Activated CD8-positive, alpha-beta T cell treated with anti-CD3 and anti-CD28 coated beads for 36 hours (primary cell): ENCODE measurements at regions of chr17 and their contacts with region 1.

Region 1: DNA sequence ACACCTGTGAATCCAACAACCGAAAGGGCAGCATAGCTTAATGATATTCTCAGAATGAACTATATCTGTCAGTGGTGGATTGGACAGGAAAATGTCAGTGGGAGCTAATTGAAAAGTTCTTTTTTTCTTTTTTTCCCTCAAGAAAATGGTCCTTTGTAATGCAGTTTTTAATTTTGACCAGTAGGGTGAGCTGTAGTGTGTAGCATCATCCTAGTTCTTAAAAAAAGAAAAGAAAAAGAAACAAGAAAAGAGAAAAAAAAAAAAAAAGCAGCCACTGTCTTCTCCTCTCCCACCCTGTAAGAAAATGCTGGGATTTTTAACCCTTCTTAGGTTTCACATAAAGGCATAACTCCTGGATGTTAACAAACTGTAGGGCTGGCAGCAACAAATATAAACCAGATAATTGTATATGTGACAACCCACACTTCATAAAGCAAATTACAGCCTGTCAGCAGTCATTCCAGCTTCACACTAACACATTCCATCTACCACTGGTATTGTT is 78.1 kb downstream of the SKAP1 start:
- DNase-seq: no peak
- ATAC-seq: peak; percentile 53
- H3K4me3 Mint-ChIP-seq: no peak overlapping the region
- H3K27ac Mint-ChIP-seq: no peak overlapping the region
- H3K4me1 Mint-ChIP-seq: peaks cover 6% of the 10 kb centered on the region
- H3K27me3 Mint-ChIP-seq: no peaks in the 10 kb centered on the region
- CTCF ChIP-seq: peak; percentile 84

Region 2: DNA sequence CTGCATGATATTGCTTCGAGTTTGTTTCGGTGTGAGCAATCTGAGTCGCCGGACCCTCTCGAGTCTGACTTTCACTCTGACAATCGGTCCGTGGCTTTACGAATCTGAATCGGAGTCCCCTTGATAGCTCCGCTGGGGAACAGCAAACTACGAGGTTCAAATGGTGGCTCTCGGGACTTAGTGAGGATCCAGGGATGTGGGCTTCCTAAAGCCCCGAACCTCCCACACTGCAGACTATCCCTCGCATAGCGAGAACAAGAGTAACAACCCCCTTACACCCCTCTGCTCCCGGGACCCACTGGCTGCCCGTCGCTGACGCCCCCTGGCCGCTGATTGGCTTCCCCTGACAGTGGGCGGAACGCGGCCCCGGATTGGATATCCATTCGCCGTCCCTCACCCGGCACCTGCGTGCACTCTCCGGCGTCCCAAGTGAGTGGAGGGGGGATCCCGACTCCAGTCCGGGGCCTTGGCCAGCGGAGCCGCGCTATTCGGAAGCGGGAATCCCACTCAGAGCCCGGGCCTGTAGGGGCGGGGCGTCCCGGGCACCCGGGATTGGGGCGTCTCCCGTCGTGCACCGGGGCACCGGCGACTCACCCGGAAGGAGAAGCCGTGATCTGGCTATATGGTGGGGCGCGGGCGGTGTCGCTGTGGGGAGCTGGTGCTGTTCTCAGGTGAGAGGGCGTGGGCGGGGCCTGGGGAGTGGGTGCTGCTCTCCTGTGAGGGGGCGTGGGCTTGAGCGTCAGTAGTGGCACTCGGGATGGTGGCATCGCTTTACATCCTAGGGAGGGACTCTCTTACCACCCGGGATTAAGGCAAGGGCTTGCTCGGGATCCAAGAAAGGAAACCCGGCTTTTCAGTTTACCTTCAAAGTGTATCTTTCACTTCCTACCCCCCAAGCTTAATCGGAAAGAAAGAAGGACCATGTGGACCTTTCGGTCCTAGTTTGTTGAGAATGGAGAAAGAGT is 244.4 kb before region 1 on chr17 and contains the start of gene SNX11:
- CTCF ChIA-PET with region 1: no interaction called
- POLR2A ChIA-PET with region 1: no interaction called
- intact Hi-C with region 1: no loop called
- DNase-seq: peak; percentile 95
- ATAC-seq: peak; percentile 88
- H3K4me3 Mint-ChIP-seq: peak within 1 kb of the TSS; percentile 98
- H3K27ac Mint-ChIP-seq: peak within 1 kb of the TSS; percentile 98
- H3K4me1 Mint-ChIP-seq: peaks cover 54% of the 10 kb centered on the region
- H3K27me3 Mint-ChIP-seq: no peaks in the 10 kb centered on the region
- CTCF ChIP-seq: no peak
- total RNA-seq, gene SNX11: 27.2 to 29.5 TPM

Region 3: GRCh38 chr17:48307814-48308411 is 44.0 kb before region 1 on chr17:
- CTCF ChIA-PET with region 1: interaction called, 12 read pairs
- POLR2A ChIA-PET with region 1: no interaction called
- intact Hi-C with region 1: no loop called
- DNase-seq: peak; percentile 69
- ATAC-seq: peak; percentile 82
- H3K4me3 Mint-ChIP-seq: no peak overlapping the region
- H3K27ac Mint-ChIP-seq: no peak overlapping the region
- H3K4me1 Mint-ChIP-seq: peaks cover 30% of the 10 kb centered on the region
- H3K27me3 Mint-ChIP-seq: no peaks in the 10 kb centered on the region
- CTCF ChIP-seq: peak; percentile 71

Region 4: DNA sequence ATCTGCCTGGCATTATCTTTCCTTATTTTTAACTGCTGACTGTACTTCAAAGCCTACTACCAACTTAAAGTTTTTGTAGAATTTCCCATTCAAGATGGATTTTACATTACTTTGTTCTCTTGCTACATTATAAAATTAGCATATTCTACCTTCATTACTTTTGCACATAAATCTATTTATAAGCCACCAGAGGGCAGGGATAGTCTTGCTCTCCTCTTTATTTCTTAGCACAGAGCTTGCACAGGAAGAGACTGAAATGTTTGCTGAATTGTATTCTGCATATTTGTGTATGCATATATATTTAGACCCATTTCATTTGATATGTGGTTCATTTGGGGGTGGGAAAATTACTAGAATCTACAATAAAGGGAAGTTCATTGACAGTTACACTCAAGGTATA is 29.8 kb before region 1 on chr17:
- CTCF ChIA-PET with region 1: no interaction called
- POLR2A ChIA-PET with region 1: no interaction called
- intact Hi-C with region 1: no loop called
- DNase-seq: no peak
- ATAC-seq: no peak
- H3K4me3 Mint-ChIP-seq: no peak overlapping the region
- H3K27ac Mint-ChIP-seq: no peak overlapping the region
- H3K4me1 Mint-ChIP-seq: peaks cover 11% of the 10 kb centered on the region
- H3K27me3 Mint-ChIP-seq: no peaks in the 10 kb centered on the region
- CTCF ChIP-seq: no peak

Region 5: DNA sequence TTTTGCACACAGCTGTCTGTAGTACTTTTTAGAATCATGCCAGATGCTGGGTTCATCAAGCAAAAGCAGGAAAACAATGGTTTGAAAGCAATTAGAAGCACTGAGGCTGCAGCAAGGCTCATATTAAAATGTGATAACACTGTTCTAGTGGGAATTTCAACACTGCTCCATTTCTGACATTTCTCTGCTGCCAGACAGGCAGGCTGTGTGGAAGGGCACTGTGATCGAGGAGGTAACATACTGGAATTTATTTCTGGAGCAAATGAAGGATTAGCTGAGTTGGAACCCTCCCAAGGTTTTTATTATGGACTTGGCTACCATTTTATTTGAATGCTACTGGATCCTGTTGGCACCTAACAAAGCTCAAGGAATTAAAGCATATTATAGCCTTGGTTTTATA is 11.3 kb after region 1 on chr17:
- CTCF ChIA-PET with region 1: interaction called, 21 read pairs
- POLR2A ChIA-PET with region 1: no interaction called
- intact Hi-C with region 1: no loop called
- DNase-seq: no peak
- ATAC-seq: no peak
- H3K4me3 Mint-ChIP-seq: no peak overlapping the region
- H3K27ac Mint-ChIP-seq: no peak overlapping the region
- H3K4me1 Mint-ChIP-seq: peaks cover 34% of the 10 kb centered on the region
- H3K27me3 Mint-ChIP-seq: no peaks in the 10 kb centered on the region
- CTCF ChIP-seq: no peak

Region 6: DNA sequence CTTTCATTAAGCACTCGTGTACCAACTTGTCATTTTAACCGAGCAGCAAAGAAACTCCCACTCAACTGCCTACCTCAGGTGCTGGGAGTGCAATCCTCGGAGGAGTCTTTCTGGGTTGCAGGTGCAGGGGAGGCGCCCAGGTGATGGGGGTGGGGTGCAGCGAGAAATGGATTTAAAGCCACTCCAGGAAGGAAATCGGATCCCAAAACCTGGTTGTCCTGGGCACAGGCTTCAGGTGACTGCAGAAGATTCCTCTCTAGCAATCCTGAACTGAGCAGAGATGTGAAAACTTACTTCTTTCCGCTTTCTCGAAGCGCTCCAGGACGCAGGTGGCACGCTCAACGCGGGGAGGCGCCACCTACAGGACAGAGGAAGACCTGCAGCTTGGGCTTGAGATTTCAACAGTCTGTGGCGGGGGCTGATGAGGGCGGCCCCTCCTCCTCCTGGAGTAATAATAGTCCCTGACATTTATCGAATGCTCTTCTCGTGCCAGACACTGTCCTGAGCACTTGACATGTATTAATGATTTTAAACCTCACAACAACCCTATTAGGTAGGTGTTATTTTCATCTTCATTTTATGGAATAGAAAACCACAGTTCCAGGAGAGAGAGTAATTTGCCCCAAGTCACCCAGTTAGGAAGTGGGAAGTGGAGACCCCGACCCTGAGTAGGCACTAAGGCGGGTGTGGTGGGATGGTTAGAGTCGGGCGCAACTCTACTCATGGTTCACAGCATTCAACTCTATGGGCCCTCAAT is 105.4 kb after region 1 on chr17:
- CTCF ChIA-PET with region 1: interaction called, 43 read pairs
- POLR2A ChIA-PET with region 1: no interaction called
- intact Hi-C with region 1: loop called (anchors 5 kb)
- DNase-seq: peak; percentile 86
- ATAC-seq: peak; percentile 81
- H3K4me3 Mint-ChIP-seq: peak overlapping the region; percentile 49
- H3K27ac Mint-ChIP-seq: peak overlapping the region; percentile 7
- H3K4me1 Mint-ChIP-seq: peaks cover 54% of the 10 kb centered on the region
- H3K27me3 Mint-ChIP-seq: no peaks in the 10 kb centered on the region
- CTCF ChIP-seq: peak; percentile 98

Region 7: DNA sequence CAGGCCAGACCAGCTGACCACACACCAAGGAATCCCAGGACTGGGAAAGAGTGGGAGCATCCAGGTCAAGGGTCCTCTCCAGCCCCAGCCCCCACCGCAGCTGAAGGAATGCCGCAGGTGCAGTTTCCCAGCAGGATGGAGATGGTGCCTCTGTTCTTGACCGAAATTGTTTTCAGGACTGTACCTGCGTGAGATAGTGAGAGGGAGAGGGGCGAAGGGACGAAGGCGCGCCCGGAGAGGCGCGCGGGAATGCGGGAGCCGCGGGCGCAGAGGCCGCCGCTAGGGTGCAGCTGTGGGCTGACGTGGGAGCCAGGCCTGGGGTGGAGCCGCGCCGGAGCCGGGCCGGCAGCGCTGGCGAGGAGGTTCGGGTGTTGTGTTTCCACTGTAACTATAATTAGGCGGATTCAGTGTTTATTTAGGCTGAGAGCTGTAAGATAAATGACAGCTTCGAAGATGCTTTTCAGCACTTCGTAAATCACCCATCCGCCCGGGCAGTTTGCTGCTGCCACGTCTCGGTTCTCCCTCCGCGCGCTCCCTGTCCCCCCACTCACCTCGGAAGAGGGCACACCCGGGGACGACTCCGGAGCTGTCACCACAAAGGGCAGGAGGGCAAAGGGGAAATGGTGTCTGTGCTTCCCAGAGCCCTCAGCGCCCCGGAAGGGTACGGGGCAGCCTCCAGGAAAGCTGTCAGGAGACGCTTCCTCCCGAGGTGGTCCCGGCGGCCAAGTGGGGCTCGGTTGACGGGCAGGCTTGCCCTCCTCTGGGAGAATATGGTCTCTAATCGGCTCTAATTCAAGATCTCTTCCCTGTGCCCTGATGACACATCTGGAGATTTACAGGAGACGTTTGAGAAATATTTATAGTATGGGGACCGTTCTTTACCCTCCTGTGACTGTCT is 140.8 kb after region 1 on chr17:
- CTCF ChIA-PET with region 1: interaction called, 13 read pairs
- POLR2A ChIA-PET with region 1: no interaction called
- intact Hi-C with region 1: no loop called
- DNase-seq: peak; percentile 70
- ATAC-seq: peak; percentile 89
- H3K4me3 Mint-ChIP-seq: peak overlapping the region; percentile 48
- H3K27ac Mint-ChIP-seq: no peak overlapping the region
- H3K4me1 Mint-ChIP-seq: peaks cover 14% of the 10 kb centered on the region
- H3K27me3 Mint-ChIP-seq: peaks cover 26% of the 10 kb centered on the region
- CTCF ChIP-seq: peak; percentile 96